ENCODE measurements at regions of chr15 and their contacts with region 1.

Region 1: DNA sequence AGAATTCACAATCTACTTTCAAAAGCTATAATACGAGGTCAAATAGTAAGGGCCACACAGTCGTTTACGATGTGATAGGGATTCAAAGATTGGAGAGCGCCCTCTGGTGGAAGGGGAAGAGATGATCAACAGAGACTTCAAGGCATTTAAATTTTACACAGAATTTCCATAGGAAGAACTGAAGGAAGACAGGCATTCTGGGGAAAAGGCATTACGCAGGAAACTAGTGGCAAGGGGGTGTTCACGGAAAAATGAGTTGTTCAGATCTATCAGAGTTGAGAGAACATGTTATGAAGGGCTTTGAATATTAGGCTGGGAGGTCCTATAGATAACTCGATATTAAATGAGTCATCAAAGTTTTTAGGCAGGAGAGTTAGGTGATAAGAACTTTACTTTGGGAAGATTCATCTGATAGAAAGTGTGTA is 128.7 kb downstream of the FRMD5 start:
- DNase-seq: no peak
- H3K4me3 ChIP-seq: no peak overlapping the region
- H3K27me3 ChIP-seq: no peaks in the 10 kb centered on the region
- CTCF ChIP-seq: peak; percentile 77

Region 2: GRCh38 chr15:44053458-44053857 is 12.9 kb before region 1 on chr15:
- CTCF ChIA-PET with region 1: interaction called, 28 read pairs
- POLR2A ChIA-PET with region 1: no interaction called
- DNase-seq: no peak
- H3K4me3 ChIP-seq: no peak overlapping the region
- H3K27me3 ChIP-seq: no peaks in the 10 kb centered on the region
- CTCF ChIP-seq: no peak